B cell (primary cell): ENCODE measurements at regions of chr2 and their contacts with region 1.

Region 1: DNA sequence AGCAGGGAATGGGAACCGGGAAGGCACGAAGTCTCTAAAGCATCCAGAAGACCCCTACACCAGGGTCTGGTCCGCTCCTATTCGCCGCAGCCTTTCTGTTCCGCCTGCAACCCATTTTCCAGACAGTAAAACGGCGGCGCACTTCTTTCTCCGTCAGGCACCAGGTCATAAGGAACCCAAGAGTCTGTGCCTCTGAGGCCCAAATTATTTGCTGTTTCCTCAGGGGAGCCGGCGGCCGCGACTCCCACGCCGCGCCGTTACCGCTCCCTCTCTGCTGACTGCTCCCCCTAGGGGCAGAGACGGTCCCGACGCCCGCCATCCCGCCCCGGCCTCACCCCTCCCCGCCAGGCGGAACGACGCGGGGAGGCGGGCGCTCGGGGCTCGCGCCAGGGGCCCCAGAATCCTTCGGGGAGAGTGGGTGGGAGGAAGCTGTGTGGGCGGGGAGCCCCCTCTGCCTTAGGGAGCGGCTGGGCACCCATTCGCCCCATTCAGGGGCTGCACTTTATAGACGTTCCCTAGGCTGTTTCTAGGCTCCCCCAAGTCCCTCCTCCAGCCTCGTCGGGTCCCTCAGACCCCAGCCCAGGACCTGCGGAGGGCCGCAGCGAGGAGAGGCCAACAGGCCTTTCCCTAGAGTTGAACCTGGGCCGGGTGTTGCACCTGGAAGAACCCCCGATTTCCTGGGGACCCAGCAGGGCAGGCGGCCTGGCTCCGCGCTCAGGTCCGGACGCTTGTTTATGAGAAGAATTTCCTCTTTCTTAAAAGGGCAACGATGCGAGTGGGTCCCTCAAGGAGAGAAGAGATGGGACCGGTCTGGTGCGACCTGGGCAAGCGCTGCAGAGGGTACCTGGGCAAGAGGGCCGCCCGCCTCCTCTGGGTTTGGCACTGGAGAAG is 3.6 kb upstream of the CTDSP1 start:
- DNase-seq: peak; percentile 98
- ATAC-seq: peak; percentile 69
- H3K4me3 ChIP-seq: peak overlapping the region; percentile 75 to 94 (median 89)
- H3K4me3 Mint-ChIP-seq: peak overlapping the region; percentile 96
- H3K27ac ChIP-seq: peak overlapping the region; percentile 88 to 89
- H3K27ac Mint-ChIP-seq: peak overlapping the region; percentile 99
- H3K4me1 ChIP-seq: peaks cover 35 to 61% of the 10 kb centered on the region in 2 donors
- H3K4me1 Mint-ChIP-seq: peaks cover 53% of the 10 kb centered on the region
- H3K27me3 ChIP-seq: no peaks in the 10 kb centered on the region
- H3K27me3 Mint-ChIP-seq: no peaks in the 10 kb centered on the region
- CTCF ChIP-seq: peak; percentile 83

Region 2: DNA sequence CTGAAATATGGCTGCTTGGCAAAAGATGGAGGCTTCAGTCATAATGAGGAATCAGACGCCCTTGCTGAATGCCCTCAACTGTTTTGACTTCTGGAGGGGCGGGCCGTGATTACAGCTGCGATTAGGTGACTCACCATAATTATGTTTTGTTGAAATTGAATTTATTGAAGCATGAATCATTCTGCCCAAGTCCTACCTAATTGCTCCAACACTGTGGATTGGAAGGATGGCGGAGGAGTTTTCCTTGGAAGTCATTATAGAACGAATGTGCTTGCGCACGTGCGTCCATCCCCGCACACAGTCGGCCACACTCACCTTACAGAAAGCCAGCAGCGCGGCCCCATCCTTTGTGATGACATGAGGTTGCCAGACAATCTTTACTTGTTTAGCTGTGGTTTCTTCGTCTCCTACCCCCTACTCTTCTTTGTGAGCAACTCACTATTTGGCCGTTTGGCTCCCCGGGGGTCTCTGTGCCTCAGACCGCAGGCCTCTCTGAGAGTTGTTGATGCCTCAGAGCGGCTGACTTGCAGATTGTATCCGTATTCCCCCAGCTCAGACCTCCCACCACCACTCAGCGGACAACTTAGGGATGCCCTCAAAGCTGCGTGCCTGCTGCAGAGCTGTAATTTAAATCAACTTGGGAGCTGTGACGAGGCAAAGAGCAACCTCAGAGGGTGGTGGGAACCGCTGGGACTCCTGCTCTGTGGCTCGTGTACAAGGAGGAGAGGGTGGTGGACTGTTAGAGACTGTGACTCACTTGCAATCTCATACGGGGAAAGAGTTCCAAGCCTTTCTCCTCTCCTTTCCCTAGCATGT is 906.7 kb before region 1 on chr2:
- CTCF ChIA-PET with region 1: no interaction called
- POLR2A ChIA-PET with region 1: no interaction called
- intact Hi-C with region 1: no loop called
- DNase-seq: no peak
- ATAC-seq: no peak
- H3K4me3 ChIP-seq: no peak overlapping the region
- H3K4me3 Mint-ChIP-seq: no peak overlapping the region
- H3K27ac ChIP-seq: no peak overlapping the region
- H3K27ac Mint-ChIP-seq: no peak overlapping the region
- H3K4me1 ChIP-seq: no peaks in the 10 kb centered on the region
- H3K4me1 Mint-ChIP-seq: no peaks in the 10 kb centered on the region
- H3K27me3 ChIP-seq: no peaks in the 10 kb centered on the region
- H3K27me3 Mint-ChIP-seq: peaks cover 8% of the 10 kb centered on the region
- CTCF ChIP-seq: no peak

Region 3: GRCh38 chr2:217753460-217754200 is 642.4 kb before region 1 on chr2:
- CTCF ChIA-PET with region 1: no interaction called
- POLR2A ChIA-PET with region 1: no interaction called
- intact Hi-C with region 1: no loop called
- DNase-seq: no peak
- ATAC-seq: no peak
- H3K4me3 ChIP-seq: no peak overlapping the region
- H3K4me3 Mint-ChIP-seq: no peak overlapping the region
- H3K27ac ChIP-seq: no peak overlapping the region
- H3K27ac Mint-ChIP-seq: no peak overlapping the region
- H3K4me1 ChIP-seq: peaks cover 6% of the 10 kb centered on the region in 2 donors
- H3K4me1 Mint-ChIP-seq: peaks cover 9% of the 10 kb centered on the region
- H3K27me3 ChIP-seq: peaks cover 0 to 25% (median 12%) of the 10 kb centered on the region in 4 experiments
- H3K27me3 Mint-ChIP-seq: peaks cover 34% of the 10 kb centered on the region
- CTCF ChIP-seq: no peak

Region 4: DNA sequence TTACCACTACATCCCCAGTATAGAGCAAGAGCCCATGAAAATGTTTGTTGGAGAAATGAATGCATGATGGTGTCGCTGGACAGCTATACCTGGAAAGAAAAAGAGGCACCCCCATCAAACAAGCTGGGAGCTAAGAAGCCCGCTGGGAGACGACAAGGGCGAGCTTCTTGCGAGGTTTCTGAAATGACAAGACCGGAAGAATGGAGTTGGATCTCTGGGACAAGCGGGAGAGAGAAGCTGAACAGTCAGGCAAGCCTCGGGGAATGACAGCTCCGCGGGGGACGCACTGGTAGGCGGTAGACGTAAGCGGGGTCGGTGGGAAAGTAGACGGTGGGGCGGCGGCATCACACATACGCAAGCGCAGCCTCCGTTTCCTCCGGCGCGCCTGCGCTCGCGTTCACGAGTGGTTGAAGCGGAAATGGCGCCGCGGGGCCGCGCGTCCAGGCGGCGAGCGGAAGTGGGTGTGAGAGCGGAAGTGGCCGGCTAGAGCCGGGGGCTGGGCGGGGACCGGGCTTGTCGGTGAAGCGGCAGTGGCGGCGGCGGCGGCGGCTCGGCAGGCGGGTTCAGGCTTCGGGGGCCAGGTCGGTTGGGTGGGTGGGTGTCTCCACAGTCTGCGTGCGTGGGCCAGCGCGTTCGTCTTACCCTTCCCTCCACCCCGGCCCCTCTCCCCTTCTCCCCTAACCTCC is 179.2 kb before region 1 on chr2 and contains the start of gene ARPC2:
- CTCF ChIA-PET with region 1: interaction called, 3 read pairs
- POLR2A ChIA-PET with region 1: no interaction called
- intact Hi-C with region 1: loop called (anchors 2 kb)
- DNase-seq: peak; percentile 98
- ATAC-seq: peak; percentile 74
- H3K4me3 ChIP-seq: peak within 1 kb of the TSS; percentile 93 to 99 (median 97)
- H3K4me3 Mint-ChIP-seq: peak within 1 kb of the TSS; percentile 90
- H3K27ac ChIP-seq: peak within 1 kb of the TSS; percentile 95 to 99
- H3K27ac Mint-ChIP-seq: peak within 1 kb of the TSS; percentile 94
- H3K4me1 ChIP-seq: peaks cover 36 to 45% of the 10 kb centered on the region in 2 donors
- H3K4me1 Mint-ChIP-seq: peaks cover 43% of the 10 kb centered on the region
- H3K27me3 ChIP-seq: no peaks in the 10 kb centered on the region
- H3K27me3 Mint-ChIP-seq: no peaks in the 10 kb centered on the region
- CTCF ChIP-seq: no peak
- total RNA-seq, gene ARPC2: 343 and 352 TPM in 2 replicates

Region 5: GRCh38 chr2:218292048-218293014 is 103.7 kb before region 1 on chr2 and contains the start of gene TMBIM1:
- CTCF ChIA-PET with region 1: interaction called, 28 read pairs
- POLR2A ChIA-PET with region 1: interaction called, 16 read pairs
- intact Hi-C with region 1: loop called (anchors 1 kb)
- DNase-seq: peak; percentile 90
- ATAC-seq: peak; percentile 72
- H3K4me3 ChIP-seq: peak within 1 kb of the TSS; percentile 50 to 95 (median 87)
- H3K4me3 Mint-ChIP-seq: peak within 1 kb of the TSS; percentile 89
- H3K27ac ChIP-seq: peak within 1 kb of the TSS; percentile 92 to 98
- H3K27ac Mint-ChIP-seq: peak within 1 kb of the TSS; percentile 93
- H3K4me1 ChIP-seq: peaks cover 57 to 71% of the 10 kb centered on the region in 2 donors
- H3K4me1 Mint-ChIP-seq: peaks cover 60% of the 10 kb centered on the region
- H3K27me3 ChIP-seq: no peaks in the 10 kb centered on the region
- H3K27me3 Mint-ChIP-seq: no peaks in the 10 kb centered on the region
- CTCF ChIP-seq: peak; percentile 90
- total RNA-seq, gene TMBIM1: 128 and 137 TPM in 2 replicates

Region 6: DNA sequence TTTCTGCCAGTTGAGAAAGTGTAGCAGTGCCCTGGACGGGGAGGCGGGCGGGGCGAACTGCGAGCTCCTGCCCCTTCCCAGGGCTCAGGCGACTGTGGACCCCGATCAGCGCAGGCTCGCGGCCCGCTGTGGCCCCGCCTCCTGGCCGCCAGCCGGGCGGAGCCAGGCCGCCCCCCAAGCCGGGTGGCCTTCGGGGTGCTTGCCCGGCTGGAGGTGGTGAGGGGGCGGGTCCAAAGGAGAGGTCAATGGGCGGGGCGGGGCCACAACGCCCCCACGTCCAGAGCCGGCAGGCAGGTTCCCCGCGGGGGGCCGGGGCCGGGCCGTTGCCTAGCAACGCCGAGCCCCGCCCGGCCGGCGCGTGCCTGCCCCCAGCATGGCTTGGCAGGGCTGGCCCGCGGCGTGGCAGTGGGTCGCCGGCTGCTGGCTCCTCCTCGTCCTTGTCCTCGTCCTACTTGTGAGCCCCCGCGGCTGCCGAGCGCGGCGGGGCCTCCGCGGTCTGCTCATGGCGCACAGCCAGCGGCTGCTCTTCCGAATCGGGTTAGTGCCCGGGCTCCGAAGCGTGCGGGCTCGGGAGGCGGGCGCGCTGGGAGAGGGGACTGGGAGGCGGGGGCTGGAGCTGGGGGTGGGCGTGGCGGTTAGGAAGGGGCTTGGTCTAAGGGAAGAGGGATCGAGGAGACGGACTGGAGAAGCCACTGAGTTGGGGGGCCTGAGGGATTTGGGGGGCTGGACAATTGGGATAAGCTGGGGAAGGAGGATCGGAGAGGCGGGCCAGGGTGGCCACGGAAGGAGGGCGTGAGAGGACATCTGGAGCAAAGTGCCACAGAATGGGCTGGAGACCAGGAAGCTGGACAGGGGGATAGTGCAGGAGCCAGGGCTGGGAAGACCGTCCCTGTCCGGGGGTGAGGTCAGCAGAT is 72.9 kb before region 1 on chr2:
- CTCF ChIA-PET with region 1: no interaction called
- POLR2A ChIA-PET with region 1: interaction called, 5 read pairs
- intact Hi-C with region 1: loop called (anchors 2 kb)
- DNase-seq: peak; percentile 74
- ATAC-seq: peak; percentile 79
- H3K4me3 ChIP-seq: peak overlapping the region in 4 of 5 experiments; percentile 31 to 63 (median 58)
- H3K4me3 Mint-ChIP-seq: peak overlapping the region; percentile 85
- H3K27ac ChIP-seq: peak overlapping the region in 1 of 2 donors; percentile 38
- H3K27ac Mint-ChIP-seq: peak overlapping the region; percentile 41
- H3K4me1 ChIP-seq: peaks cover 34 to 40% of the 10 kb centered on the region in 2 donors
- H3K4me1 Mint-ChIP-seq: peaks cover 41% of the 10 kb centered on the region
- H3K27me3 ChIP-seq: peaks cover 0 to 11% (median 5%) of the 10 kb centered on the region in 4 experiments
- H3K27me3 Mint-ChIP-seq: no peaks in the 10 kb centered on the region
- CTCF ChIP-seq: no peak

Region 7: DNA sequence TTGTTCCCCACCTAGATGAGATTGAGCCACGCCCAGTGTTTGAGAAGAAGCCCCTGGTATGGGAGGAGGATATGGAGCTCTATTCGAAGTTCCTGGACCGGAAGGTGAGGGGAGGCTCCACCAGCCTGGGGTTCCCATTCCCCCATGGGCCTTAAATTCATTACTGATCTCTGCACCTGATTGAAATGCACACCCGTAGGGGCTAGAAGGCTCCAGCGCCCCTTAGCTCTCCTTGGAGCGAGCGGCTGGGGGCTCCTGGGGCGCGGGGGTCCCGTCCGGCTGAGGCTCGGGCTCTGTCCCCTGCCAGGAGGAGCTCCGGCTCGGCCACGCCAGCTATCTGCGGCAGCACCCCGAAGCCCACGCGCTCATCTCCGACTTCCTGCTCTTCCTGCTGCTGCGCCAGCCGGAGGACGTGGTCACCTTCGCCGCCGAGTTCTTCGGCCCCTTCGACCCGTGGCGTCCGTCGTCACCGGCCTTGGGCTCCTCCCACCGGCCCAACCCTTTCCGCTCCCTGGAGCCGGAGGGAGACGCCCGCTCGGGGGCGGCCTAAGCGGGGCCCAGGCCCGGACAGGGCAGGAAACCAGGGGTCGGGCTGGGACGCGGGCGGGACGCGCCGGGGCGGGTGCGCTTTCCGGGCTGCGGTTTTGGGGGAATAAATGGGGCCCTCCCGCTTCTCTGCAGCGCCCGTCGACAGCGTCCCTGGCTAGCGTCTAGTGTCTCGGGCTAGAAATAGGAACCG is 28.5 kb before region 1 on chr2:
- CTCF ChIA-PET with region 1: interaction called, 11 read pairs
- POLR2A ChIA-PET with region 1: interaction called, 3 read pairs
- intact Hi-C with region 1: loop called (anchors 2 kb)
- DNase-seq: peak; percentile 74
- ATAC-seq: peak; percentile 92
- H3K4me3 ChIP-seq: peak overlapping the region; percentile 58 to 83 (median 67)
- H3K4me3 Mint-ChIP-seq: peak overlapping the region; percentile 88
- H3K27ac ChIP-seq: peak overlapping the region; percentile 70 to 75
- H3K27ac Mint-ChIP-seq: peak overlapping the region; percentile 87
- H3K4me1 ChIP-seq: peaks cover 19 to 41% of the 10 kb centered on the region in 2 donors
- H3K4me1 Mint-ChIP-seq: peaks cover 28% of the 10 kb centered on the region
- H3K27me3 ChIP-seq: no peaks in the 10 kb centered on the region
- H3K27me3 Mint-ChIP-seq: no peaks in the 10 kb centered on the region
- CTCF ChIP-seq: no peak

Region 8: DNA sequence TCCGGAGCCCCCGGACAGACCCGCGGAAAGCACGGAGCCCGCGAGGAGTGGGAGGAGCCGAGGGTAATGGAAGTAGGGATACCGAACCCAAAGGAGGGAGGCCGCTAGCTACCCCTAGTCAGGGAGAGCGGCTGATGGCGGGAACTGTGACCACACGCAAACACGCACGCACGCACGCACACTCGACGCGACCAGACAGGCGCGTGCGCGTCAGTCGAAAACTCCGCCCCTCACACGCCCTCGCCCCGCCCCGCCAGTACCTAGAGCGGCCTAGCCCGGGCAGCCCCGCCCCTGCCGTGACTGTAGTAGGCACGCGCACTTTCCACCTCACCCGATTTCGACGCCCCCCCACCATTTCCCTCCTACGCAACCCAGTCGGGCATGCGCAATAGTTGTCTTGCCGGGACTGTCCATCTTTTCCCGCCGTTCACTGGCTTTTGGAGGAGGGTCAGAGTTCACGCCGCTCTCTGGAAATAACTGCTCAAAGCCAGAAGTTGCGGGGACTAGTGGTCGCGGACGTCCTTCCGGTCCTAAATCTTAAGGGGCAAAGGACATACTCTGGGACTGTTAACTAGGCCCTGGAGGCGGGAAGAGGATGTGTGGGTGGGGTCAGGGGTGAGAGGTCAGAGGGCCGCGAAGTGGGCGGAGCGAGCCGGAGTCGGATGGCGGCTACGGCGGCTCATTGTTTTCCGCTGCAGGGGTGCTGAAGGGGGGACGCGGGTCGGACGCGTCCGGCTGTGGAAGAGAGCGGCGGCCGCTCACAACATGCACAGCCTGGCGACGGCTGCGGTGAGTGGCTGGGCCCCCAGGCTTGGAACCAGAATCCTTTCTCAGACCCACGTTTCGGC is 172.4 kb after region 1 on chr2 and contains the starts of genes CNOT9 and USP37:
- CTCF ChIA-PET with region 1: no interaction called
- POLR2A ChIA-PET with region 1: no interaction called
- intact Hi-C with region 1: loop called (anchors 1 kb)
- DNase-seq: peak; percentile 100
- ATAC-seq: peak; percentile 92
- H3K4me3 ChIP-seq: peak within 1 kb of the TSS; percentile 65 to 91 (median 84)
- H3K4me3 Mint-ChIP-seq: peak within 1 kb of the TSS; percentile 96
- H3K27ac ChIP-seq: peak within 1 kb of the TSS; percentile 93 to 95
- H3K27ac Mint-ChIP-seq: peak within 1 kb of the TSS; percentile 100
- H3K4me1 ChIP-seq: peaks cover 29 to 31% of the 10 kb centered on the region in 2 donors
- H3K4me1 Mint-ChIP-seq: peaks cover 56% of the 10 kb centered on the region
- H3K27me3 ChIP-seq: no peaks in the 10 kb centered on the region
- H3K27me3 Mint-ChIP-seq: no peaks in the 10 kb centered on the region
- CTCF ChIP-seq: no peak
- total RNA-seq, gene CNOT9: 54.5 and 66.9 TPM in 2 replicates
- total RNA-seq, gene USP37: 29.0 and 32.4 TPM in 2 replicates